GM13976 (cell line): ENCODE measurements at regions of chr2 and their contacts with region 1.

Region 1: GRCh38 chr2:155368934-155369333 is 670.4 kb downstream of the KCNJ3 start:
- DNase-seq: no peak
- CTCF ChIP-seq: peak; percentile 24

Region 2: DNA sequence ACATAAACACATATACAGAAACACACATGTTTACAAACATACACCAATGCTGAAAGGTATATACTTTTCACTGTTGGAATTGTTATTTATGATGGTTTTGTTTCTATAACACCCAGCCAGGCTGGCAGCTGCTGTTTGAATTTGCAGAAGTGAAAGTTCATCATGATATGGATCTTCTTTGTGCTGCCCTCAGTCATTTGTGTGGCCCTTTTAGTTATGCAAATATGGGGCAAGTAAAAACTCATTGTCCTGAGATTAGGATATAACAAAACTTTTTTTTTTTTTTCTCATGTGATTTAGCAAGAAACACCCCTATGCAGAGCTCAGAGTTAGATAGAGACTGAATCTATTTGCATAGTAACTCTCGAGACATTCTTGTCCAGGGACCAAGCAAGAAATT is 43.7 kb after region 1 on chr2:
- in situ Hi-C with region 1: no loop called
- DNase-seq: no peak
- CTCF ChIP-seq: no peak

Region 3: GRCh38 chr2:155633887-155634570 is 265.1 kb after region 1 on chr2:
- in situ Hi-C with region 1: no loop called
- DNase-seq: no peak
- CTCF ChIP-seq: no peak

Region 4: DNA sequence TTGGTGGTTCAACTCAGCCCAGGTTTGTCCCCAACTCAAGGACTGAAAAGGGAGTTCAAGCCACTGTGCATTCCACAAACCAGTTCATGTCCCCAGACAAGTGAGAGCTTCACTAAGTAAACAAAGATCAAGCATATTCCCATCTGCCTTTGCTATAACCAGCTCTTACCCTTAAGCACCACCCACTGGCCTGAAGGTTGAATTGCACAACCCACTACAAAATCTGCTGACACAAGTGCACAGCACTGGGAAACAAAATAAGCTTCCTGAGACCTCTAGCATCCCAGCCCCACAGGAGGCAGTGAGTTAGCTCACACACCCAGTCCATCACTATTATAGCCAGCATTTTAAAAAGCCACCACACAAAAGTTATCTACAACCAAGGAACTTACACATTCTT is 447.0 kb after region 1 on chr2:
- in situ Hi-C with region 1: loop called (anchors 25 kb)
- DNase-seq: peak; percentile 11
- CTCF ChIP-seq: peak; percentile 51

Region 5: GRCh38 chr2:156110890-156111289 is 742.0 kb after region 1 on chr2:
- in situ Hi-C with region 1: no loop called
- DNase-seq: peak; percentile 35
- CTCF ChIP-seq: peak; percentile 33